Calu3 (cell line): ENCODE measurements at regions of chr20 and their contacts with region 1.

Region 1: DNA sequence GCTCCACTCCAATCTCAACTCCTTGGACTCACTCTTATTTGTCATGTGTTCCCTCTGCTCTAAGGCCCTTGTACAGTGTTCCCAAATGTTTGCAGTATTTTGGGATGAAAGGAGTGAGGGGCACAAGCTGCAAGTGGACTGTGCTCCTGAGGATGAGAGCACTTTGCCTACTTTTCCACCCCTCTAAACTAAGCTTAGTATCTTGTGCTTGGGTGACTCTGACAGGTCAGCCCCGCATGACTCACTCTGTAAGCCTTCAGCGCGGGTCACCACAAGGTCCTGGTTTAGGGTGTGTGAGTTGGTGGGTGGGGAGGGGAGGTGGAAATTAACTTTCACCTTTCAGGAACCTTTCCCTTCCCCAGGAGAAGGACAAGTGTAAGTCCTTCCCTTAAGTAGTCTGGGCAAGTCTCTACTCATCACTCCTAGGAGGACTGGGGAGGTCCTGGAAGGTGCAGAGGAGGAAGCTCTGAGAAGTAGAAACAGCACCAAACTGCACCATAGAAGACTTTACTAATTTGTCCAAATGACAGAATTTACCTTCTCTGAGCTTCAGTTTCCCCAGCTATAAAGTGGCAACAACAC is 68.8 kb upstream of the EPB41L1 start:
- DNase-seq: peak; percentile 93
- H3K4me3 Mint-ChIP-seq: peak overlapping the region; percentile 60
- H3K27ac Mint-ChIP-seq: peak overlapping the region; percentile 89
- H3K4me1 Mint-ChIP-seq: peaks cover 82% of the 10 kb centered on the region
- H3K27me3 Mint-ChIP-seq: no peaks in the 10 kb centered on the region
- CTCF ChIP-seq: no peak

Region 2: GRCh38 chr20:36030149-36030548 is 55.6 kb before region 1 on chr20:
- CTCF ChIA-PET with region 1: no interaction called
- intact Hi-C with region 1: no loop called
- DNase-seq: no peak
- H3K4me3 Mint-ChIP-seq: no peak overlapping the region
- H3K27ac Mint-ChIP-seq: no peak overlapping the region
- H3K4me1 Mint-ChIP-seq: peaks cover 6% of the 10 kb centered on the region
- H3K27me3 Mint-ChIP-seq: no peaks in the 10 kb centered on the region
- CTCF ChIP-seq: no peak

Region 3: GRCh38 chr20:36064658-36065426 is 20.9 kb before region 1 on chr20:
- CTCF ChIA-PET with region 1: interaction called, 11 read pairs
- intact Hi-C with region 1: loop called (anchors 2 kb)
- DNase-seq: peak; percentile 100
- H3K4me3 Mint-ChIP-seq: peak overlapping the region; percentile 95
- H3K27ac Mint-ChIP-seq: peak overlapping the region; percentile 91
- H3K4me1 Mint-ChIP-seq: peaks cover 35% of the 10 kb centered on the region
- H3K27me3 Mint-ChIP-seq: no peaks in the 10 kb centered on the region
- CTCF ChIP-seq: no peak

Region 4: GRCh38 chr20:36074983-36075382 is 10.8 kb before region 1 on chr20:
- CTCF ChIA-PET with region 1: interaction called, 18 read pairs
- intact Hi-C with region 1: no loop called
- DNase-seq: peak; percentile 61
- H3K4me3 Mint-ChIP-seq: no peak overlapping the region
- H3K27ac Mint-ChIP-seq: no peak overlapping the region
- H3K4me1 Mint-ChIP-seq: peaks cover 52% of the 10 kb centered on the region
- H3K27me3 Mint-ChIP-seq: no peaks in the 10 kb centered on the region
- CTCF ChIP-seq: no peak

Region 5: DNA sequence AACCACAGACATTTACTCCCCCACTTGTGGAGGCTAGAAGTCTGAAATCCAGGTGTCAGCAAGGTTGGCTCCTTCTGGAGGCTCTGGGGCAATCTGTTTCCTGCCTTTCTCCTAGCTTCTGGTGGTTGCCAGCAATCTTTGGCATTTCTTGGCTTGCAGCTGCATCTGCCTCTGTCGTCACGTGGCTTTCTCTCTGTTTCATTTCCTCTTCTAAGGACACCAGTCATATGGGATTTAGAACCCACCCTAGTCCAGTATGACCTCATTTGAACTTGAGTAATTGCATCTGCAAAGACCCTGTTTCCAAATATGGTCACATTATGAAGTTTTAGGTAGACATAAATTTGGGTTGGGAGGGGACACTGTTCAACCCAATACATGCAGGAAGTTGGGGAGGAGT is 12.6 kb after region 1 on chr20:
- CTCF ChIA-PET with region 1: interaction called, 12 read pairs
- intact Hi-C with region 1: no loop called
- DNase-seq: no peak
- H3K4me3 Mint-ChIP-seq: no peak overlapping the region
- H3K27ac Mint-ChIP-seq: no peak overlapping the region
- H3K4me1 Mint-ChIP-seq: peaks cover 73% of the 10 kb centered on the region
- H3K27me3 Mint-ChIP-seq: no peaks in the 10 kb centered on the region
- CTCF ChIP-seq: no peak